ENCODE measurements at regions of chr19 and their contacts with region 1.

Region 1: GRCh38 chr19:7590261-7590660 is 5.4 kb upstream of the CAMSAP3 start:
- DNase-seq: peak; percentile 50
- H3K4me3 ChIP-seq: no peak overlapping the region
- H3K27ac ChIP-seq: no peak overlapping the region
- H3K4me1 ChIP-seq: no peaks in the 10 kb centered on the region
- H3K27me3 ChIP-seq: peaks cover 35% of the 10 kb centered on the region
- CTCF ChIP-seq: no peak
- EP300 ChIP-seq: no peak
- POLR2A ChIP-seq: no peak

Region 2: DNA sequence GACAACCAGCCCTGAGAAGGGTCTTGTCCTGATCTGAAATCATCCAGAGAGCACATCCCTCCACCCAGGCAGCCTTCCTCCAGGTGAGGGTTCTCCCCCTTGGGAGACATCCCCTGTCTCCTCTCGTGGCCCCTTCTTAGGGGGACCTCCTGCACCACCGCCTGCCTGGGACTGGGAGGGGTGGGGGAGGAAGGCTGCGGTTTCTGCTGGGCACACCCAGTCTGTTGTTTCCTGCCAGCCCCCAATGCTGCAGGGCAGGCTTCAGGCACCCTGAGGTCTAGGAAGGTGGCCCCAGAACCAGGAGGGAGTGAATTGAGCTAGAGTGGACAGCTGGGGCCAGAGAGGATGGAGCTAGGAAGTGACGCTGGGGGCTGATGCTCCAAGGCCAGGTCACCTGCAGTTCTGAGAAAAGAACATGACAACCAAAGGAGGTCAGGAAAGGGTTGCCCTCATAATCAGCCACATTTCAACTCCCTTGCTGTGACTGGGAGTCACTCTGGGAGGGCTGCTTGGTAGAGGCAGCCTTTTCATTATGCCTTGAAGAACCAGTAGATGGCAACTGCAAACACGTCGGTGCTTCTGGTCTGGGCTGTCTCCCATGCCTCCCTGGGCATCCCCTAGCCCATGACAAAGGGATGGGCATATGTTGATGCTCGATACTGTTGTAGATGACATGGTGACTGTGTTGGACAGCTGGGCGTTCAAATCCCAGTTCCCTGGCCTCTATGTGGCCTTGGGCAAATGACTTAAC is 240.1 kb before region 1 on chr19:
- in situ Hi-C with region 1: no loop called
- intact Hi-C with region 1: loop called (anchors 2 kb)
- DNase-seq: peak; percentile 48
- H3K4me3 ChIP-seq: peak overlapping the region in 1 of 4 donors; percentile 28
- H3K27ac ChIP-seq: peak overlapping the region; percentile 39 to 61 (median 48)
- H3K4me1 ChIP-seq: peaks cover under 1 to 7% (median 4%) of the 10 kb centered on the region in 4 donors
- H3K27me3 ChIP-seq: no peaks in the 10 kb centered on the region
- CTCF ChIP-seq: no peak
- EP300 ChIP-seq: no peak
- POLR2A ChIP-seq: peak; percentile 27

Measured in transverse colon (tissue), 4 donors.